Prostate gland (tissue), 2 donors: ENCODE measurements at regions of chr13 and their contacts with region 1.

Region 1: GRCh38 chr13:35984776-35985453 is 146.3 kb downstream of the DCLK1 start:
- DNase-seq: no peak
- H3K4me3 ChIP-seq: no peak overlapping the region
- H3K27ac ChIP-seq: no peak overlapping the region
- H3K4me1 ChIP-seq: no peaks in the 10 kb centered on the region
- H3K27me3 ChIP-seq: no peaks in the 10 kb centered on the region
- CTCF ChIP-seq: no peak
- POLR2A ChIP-seq: no peak

Region 2: DNA sequence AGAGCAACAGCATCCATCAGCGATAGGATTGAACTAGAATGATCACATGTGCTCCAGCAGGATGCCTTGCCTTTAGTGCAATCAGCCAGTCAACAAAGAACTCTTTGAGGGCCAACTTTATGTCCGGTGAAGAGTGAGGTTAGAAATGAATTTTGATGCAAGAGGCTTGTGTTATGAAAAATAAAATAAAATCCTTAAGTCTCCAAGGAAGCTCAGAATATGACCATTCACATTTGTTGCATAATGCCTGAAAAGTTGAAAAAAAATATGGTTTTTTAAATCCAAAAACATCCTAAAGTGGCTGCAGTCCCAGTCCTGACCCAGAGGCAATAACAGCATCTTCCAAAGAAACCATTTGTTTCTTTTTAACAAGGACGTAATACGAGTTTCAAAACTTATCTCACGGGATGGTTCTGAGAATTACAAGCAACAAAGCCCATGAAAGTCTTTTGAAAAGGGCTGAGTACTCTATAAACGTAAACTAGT is 85.0 kb after region 1 on chr13:
- intact Hi-C with region 1: loop called (anchors 10 kb)
- DNase-seq: no peak
- H3K4me3 ChIP-seq: no peak overlapping the region
- H3K27ac ChIP-seq: no peak overlapping the region
- H3K4me1 ChIP-seq: no peaks in the 10 kb centered on the region
- H3K27me3 ChIP-seq: no peaks in the 10 kb centered on the region
- CTCF ChIP-seq: no peak
- POLR2A ChIP-seq: no peak